Ascending aorta (tissue), 2 donors: ENCODE measurements at regions of chr14 and their contacts with region 1.

Region 1: GRCh38 chr14:73713803-73714655 is at the start of gene PNMA1:
- DNase-seq: peak; percentile 46 to 92
- H3K4me3 ChIP-seq: peak within 1 kb of the TSS; percentile 77 to 88
- H3K27ac ChIP-seq: peak within 1 kb of the TSS; percentile 86 to 94
- H3K4me1 ChIP-seq: peaks cover 8 to 17% of the 10 kb centered on the region in 2 donors
- H3K27me3 ChIP-seq: no peaks in the 10 kb centered on the region
- CTCF ChIP-seq: peak in 1 of 3 experiments; percentile 19
- total RNA-seq, gene PNMA1: 30.2 TPM

Region 2: GRCh38 chr14:73503648-73504047 is 210.4 kb before region 1 on chr14:
- intact Hi-C with region 1: loop called (anchors 10 kb)
- DNase-seq: no peak
- H3K4me3 ChIP-seq: no peak overlapping the region
- H3K27ac ChIP-seq: no peak overlapping the region
- H3K4me1 ChIP-seq: no peaks in the 10 kb centered on the region
- H3K27me3 ChIP-seq: no peaks in the 10 kb centered on the region
- CTCF ChIP-seq: no peak

Region 3: DNA sequence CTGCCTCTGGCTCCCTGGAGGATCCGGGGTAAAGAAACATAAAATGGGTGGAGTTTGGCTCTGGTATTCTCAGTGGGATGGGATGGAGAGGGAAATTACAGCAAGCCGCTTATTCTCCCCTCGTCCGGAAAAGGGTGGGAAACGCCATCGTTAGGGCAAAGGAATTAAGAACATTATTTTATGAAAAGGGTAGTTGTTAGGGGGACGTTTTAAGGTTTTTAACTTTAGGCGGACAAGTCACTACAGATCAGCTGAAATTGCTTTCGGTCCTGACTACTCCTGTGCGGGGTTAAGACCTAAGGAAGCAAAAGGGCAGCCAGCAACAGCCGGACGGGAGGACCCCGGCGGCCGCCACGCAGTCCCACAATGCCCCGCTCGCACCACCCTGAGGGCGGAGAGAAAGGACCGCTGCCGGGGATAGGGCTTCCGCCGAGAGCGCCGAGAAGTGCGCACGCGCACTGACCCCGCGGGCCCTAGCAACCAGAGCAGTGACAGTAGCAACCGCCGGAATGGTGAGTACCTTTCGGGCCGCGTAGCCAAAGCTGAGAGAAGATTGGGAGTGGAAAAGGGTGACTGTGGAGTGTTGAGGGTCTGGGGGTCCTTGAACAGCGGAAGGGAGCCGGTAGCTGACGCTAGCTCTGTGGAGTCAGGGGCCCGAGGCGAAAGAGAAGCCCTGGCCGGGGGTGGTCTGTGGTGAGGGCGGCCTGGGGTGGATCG is 69.3 kb before region 1 on chr14 and contains the start of gene DNAL1:
- intact Hi-C with region 1: loop called (anchors 2 kb)
- DNase-seq: peak; percentile 67 to 96
- H3K4me3 ChIP-seq: peak within 1 kb of the TSS; percentile 63 to 87
- H3K27ac ChIP-seq: peak within 1 kb of the TSS; percentile 75 to 82
- H3K4me1 ChIP-seq: peaks cover 0 to 6% of the 10 kb centered on the region in 2 donors
- H3K27me3 ChIP-seq: no peaks in the 10 kb centered on the region
- CTCF ChIP-seq: no peak
- total RNA-seq, gene DNAL1: 1.5 TPM

Region 4: GRCh38 chr14:73949744-73950734 is 236.0 kb after region 1 on chr14 and contains the starts of genes COQ6 and FAM161B:
- intact Hi-C with region 1: loop called (anchors 5 kb)
- DNase-seq: peak; percentile 79 to 97
- H3K4me3 ChIP-seq: peak within 1 kb of the TSS; percentile 78 to 85
- H3K27ac ChIP-seq: peak within 1 kb of the TSS; percentile 88 to 95
- H3K4me1 ChIP-seq: peaks cover 0 to 12% of the 10 kb centered on the region in 2 donors
- H3K27me3 ChIP-seq: no peaks in the 10 kb centered on the region
- CTCF ChIP-seq: peak in 2 of 3 experiments; percentile 7 to 19
- total RNA-seq, gene COQ6: 6.7 TPM
- total RNA-seq, gene FAM161B: 0.53 TPM

Region 5: DNA sequence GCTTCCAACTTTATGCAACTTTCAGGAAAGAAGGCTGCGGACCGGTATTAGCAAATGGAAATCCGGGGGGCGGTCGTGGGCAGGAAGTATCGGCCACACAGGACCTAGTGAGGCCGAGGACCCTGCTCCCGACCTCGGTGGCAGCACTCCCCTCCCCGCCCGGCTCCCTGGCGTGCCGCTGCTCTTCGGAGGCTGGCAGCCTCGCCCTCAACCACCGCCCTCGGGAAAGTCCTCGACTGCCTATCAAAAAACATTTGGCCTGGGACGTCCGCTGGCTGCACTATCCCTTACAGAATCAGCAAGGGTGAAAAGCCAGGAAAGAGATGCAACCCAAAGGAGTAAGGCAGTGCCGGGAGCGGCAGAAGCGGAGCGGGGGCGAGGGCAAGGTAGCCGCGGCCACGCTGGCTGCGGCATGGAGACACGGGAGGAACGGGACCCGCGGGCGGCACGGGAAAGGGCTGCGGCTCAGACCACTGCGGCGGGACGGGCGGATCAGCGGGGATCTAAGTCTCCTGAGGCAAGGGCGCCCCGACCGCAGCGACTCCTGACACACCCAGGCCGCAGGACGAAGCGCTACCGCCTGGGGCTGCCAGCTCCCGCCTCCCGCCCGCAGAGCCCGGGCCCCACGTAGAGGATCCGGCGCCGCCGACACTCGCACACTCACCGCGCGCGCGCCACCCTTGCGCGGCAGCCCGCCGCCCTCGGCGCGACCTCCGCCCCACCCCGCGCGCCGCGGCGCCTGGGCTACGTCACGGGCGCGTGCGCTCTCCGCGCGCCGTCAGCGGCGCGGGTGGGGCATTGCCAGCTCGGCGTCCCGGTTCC is 304.8 kb after region 1 on chr14 and contains the starts of genes BBOF1 and ENTPD5:
- intact Hi-C with region 1: loop called (anchors 10 kb)
- DNase-seq: peak; percentile 31 to 92
- H3K4me3 ChIP-seq: peak within 1 kb of the TSS; percentile 82 to 97
- H3K27ac ChIP-seq: peak within 1 kb of the TSS; percentile 95 to 99
- H3K4me1 ChIP-seq: peaks cover 2 to 7% of the 10 kb centered on the region in 2 donors
- H3K27me3 ChIP-seq: no peaks in the 10 kb centered on the region
- CTCF ChIP-seq: no peak
- total RNA-seq, gene BBOF1: 16.2 TPM
- total RNA-seq, gene ENTPD5: 2.6 TPM